Activated CD8-positive, alpha-beta T cell treated with anti-CD3 and anti-CD28 coated beads, Interleukin-2, amount 10 ng/mL, durations not matched to agents 7 days and 5 days (primary cell): ENCODE measurements at regions of chr7 and their contacts with region 1.

Region 1: GRCh38 chr7:45259966-45260646 is 102.5 kb downstream of the RAMP3 start:
- DNase-seq: peak; percentile 77
- ATAC-seq: peak; percentile 93
- H3K4me3 Mint-ChIP-seq: no peak overlapping the region
- H3K27ac Mint-ChIP-seq: no peak overlapping the region
- H3K4me1 Mint-ChIP-seq: peaks cover 2% of the 10 kb centered on the region
- H3K27me3 Mint-ChIP-seq: peaks cover 6% of the 10 kb centered on the region

Region 2: DNA sequence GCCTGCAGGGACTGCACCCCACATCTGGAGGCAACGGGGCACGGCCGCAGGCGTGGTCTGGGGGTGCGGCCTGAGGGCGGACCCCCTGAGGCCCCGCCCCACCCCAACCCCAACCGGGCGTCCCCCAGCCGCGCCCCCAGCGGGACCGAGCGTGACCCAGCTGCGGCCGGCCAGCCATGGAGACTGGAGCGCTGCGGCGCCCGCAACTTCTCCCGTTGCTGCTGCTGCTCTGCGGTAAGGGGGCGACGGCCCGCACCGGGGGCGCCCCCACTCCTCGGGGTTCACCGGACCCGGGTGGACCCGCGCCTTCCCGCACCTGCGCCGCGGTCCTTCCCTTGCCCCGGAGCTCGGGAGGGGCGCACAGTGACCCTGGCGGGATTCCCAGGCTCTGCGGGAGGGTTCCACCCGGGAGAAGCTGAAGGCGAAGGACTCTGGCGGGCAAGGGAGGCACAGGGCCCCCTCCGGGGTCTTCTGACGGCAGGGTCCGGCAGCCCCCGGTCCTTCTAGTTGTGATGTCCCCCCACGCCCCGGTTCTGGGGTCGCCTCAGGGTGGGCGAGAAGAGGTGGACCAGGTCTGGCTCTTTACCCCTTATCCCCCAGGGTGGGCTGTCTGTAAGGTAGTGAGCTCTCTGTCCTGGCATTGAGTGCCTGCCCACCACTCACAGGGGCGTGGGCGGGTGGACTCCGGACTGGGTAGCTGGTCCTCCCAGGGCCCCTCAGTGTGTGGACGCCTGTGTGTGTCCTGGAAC is 102.3 kb before region 1 on chr7 and contains the start of gene RAMP3:
- CTCF ChIA-PET with region 1: interaction called, 43 read pairs
- POLR2A ChIA-PET with region 1: no interaction called
- DNase-seq: no peak
- ATAC-seq: no peak
- H3K4me3 Mint-ChIP-seq: no peak within 1 kb of the TSS
- H3K27ac Mint-ChIP-seq: no peak within 1 kb of the TSS
- H3K4me1 Mint-ChIP-seq: peaks cover 9% of the 10 kb centered on the region
- H3K27me3 Mint-ChIP-seq: peaks cover 22% of the 10 kb centered on the region
- total RNA-seq, gene RAMP3: not detected